Aorta (tissue), 5 donors: ENCODE measurements at regions of chr2 and their contacts with region 1.

Region 1: GRCh38 chr2:65432227-65433190 is at the start of gene SPRED2:
- DNase-seq: peak; percentile 96 to 97
- ATAC-seq: peak; percentile 86
- H3K4me3 ChIP-seq: peak within 1 kb of the TSS; percentile 32 to 88
- H3K27ac ChIP-seq: peak within 1 kb of the TSS; percentile 34 to 89
- H3K4me1 ChIP-seq: no peaks in the 10 kb centered on the region
- H3K27me3 ChIP-seq: no peaks in the 10 kb centered on the region
- total RNA-seq, gene SPRED2: 36.5 to 38.3 TPM

Region 2: DNA sequence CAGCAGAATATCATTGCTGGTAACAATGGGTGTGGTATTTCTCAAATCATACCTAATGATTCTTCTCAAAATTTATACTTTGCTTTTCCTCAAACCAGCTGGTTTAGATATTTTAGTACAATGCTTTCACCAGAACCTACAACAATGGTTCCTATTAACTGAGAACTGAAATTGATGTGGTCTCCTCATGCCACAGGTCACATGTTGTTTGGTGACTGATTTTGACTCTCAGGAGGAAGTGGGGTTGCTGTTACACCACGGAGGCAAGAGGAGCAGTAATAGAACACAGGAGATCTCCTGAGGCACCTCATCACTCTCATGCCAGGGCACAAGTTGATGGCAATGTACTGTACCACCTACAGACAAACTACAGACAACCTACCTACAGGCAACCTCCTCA is 379.3 kb before region 1 on chr2:
- intact Hi-C with region 1: loop called in 1 of 2 experiments (anchors 5 kb)
- DNase-seq: no peak
- ATAC-seq: no peak
- H3K4me3 ChIP-seq: no peak overlapping the region
- H3K27ac ChIP-seq: no peak overlapping the region
- H3K4me1 ChIP-seq: no peaks in the 10 kb centered on the region
- H3K27me3 ChIP-seq: no peaks in the 10 kb centered on the region

Region 3: DNA sequence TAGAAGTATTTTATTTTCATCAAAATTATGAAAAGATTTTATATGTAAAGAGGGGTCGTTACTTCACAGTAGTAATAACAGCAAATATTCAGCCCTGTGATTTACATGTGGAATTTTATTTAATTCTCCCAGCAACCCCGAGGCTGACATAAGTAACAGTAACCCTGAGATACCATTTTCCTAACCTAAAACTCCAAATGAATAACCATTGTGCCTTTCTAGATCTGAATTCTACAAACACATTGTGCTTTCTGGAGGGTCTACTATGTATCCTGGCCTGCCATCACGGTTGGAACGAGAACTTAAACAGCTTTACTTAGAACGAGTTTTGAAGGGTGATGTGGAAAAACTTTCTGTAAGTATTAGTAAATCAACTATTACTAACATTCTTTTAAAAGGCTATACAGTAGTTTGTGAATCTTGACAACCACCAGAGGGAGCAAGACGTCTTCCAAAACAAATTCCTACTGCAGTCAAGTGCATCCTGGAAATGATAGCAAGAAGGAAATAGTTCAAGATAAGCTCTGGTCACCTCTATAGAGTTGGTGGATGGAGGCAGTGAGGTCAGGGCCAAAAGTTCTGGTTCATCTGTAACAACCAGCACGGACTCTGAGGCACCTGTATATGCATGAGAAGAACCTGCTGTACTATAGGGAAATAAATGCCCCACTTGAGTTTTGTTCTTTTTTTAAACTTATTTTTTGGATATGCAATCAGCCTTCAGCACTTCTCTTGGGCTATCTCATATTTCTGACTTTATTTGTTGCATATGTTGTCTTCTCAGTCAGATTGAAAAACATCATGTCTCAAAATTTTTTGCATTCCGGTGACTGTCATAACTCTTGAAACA is 167.5 kb before region 1 on chr2:
- intact Hi-C with region 1: loop called (anchors 2 to 10 kb)
- DNase-seq: no peak
- ATAC-seq: peak; percentile 68
- H3K4me3 ChIP-seq: no peak overlapping the region
- H3K27ac ChIP-seq: no peak overlapping the region
- H3K4me1 ChIP-seq: no peaks in the 10 kb centered on the region
- H3K27me3 ChIP-seq: no peaks in the 10 kb centered on the region

Region 4: GRCh38 chr2:65316072-65316471 is 116.4 kb before region 1 on chr2:
- intact Hi-C with region 1: loop called (anchors 5 kb)
- DNase-seq: peak; percentile 88
- ATAC-seq: peak; percentile 88
- H3K4me3 ChIP-seq: no peak overlapping the region
- H3K27ac ChIP-seq: peak overlapping the region in 1 of 2 donors; percentile 60
- H3K4me1 ChIP-seq: no peaks in the 10 kb centered on the region
- H3K27me3 ChIP-seq: no peaks in the 10 kb centered on the region

Region 5: GRCh38 chr2:65554765-65555591 is 122.5 kb after region 1 on chr2:
- intact Hi-C with region 1: loop called (anchors 2 kb)
- DNase-seq: no peak
- ATAC-seq: no peak
- H3K4me3 ChIP-seq: no peak overlapping the region
- H3K27ac ChIP-seq: no peak overlapping the region
- H3K4me1 ChIP-seq: no peaks in the 10 kb centered on the region
- H3K27me3 ChIP-seq: no peaks in the 10 kb centered on the region

Region 6: GRCh38 chr2:65576861-65577601 is 144.5 kb after region 1 on chr2:
- intact Hi-C with region 1: no loop called
- DNase-seq: no peak
- ATAC-seq: peak; percentile 62
- H3K4me3 ChIP-seq: no peak overlapping the region
- H3K27ac ChIP-seq: peak overlapping the region; percentile 72 to 96
- H3K4me1 ChIP-seq: peaks cover 0 to 2% of the 10 kb centered on the region in 2 donors
- H3K27me3 ChIP-seq: no peaks in the 10 kb centered on the region

Region 7: DNA sequence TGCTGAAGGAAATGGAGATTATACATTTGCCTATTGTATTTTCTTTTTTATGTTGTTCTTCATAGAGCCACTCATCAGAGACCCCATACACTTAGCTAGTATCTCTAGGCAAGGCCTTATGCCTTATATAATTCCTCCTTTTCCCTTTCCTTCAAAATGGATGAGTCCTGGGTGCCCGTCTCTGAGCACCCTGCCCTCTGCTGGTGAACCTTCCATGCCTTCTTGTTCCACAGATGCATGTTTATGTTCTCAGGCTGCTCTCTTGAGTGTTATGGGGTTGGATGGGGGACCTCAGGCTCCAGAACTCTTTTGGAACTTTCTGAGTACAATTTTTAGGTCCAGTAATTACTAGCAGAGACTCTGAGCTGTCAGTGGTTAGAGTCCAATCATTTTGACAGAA is 368.5 kb after region 1 on chr2:
- intact Hi-C with region 1: no loop called
- DNase-seq: no peak
- ATAC-seq: no peak
- H3K4me3 ChIP-seq: no peak overlapping the region
- H3K27ac ChIP-seq: no peak overlapping the region
- H3K4me1 ChIP-seq: no peaks in the 10 kb centered on the region
- H3K27me3 ChIP-seq: no peaks in the 10 kb centered on the region